ENCODE measurements at regions of chr3 and their contacts with region 1.

Region 1: DNA sequence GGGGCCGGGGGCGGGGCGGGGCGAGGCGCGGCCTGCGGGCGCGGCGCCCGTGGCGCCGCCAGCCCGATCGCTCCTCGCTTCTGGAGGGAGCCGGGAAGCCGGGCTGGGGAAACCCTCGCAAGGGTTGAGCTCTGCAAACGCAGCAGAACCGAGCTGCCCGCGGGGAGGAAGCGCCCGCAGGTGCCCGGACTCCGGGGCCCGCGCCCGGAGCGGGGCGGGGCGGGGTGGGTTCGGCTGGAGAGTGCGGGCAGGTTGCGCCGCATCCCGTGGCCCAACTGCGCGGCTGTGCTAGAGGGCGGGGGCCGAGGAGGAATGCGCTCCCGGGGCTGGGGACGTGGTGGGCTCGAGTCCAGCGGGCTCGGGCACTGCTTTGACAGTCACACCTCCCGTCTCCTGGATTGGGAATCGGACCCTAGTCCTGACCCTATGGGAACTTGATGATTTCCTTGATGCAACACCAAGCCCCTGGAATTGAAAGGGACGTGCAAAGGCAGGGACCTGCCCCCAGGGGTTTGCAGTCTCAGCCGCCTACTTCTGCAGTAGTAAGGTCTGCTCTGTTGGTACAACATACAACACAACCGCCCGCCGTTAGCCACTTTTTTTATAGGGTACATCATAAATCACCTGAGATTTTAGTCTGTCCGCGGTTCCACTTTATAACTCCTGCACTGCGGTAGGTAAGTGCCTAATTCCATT is 34.3 kb downstream of the ZBTB38 start:
- DNase-seq: peak; percentile 60
- H3K4me3 Mint-ChIP-seq: peak overlapping the region; percentile 88
- H3K27ac Mint-ChIP-seq: peak overlapping the region; percentile 92
- H3K4me1 Mint-ChIP-seq: peaks cover 67% of the 10 kb centered on the region
- H3K27me3 Mint-ChIP-seq: no peaks in the 10 kb centered on the region

Region 2: GRCh38 chr3:140467104-140467577 is 935.5 kb before region 1 on chr3:
- CTCF ChIA-PET with region 1: no interaction called
- POLR2A ChIA-PET with region 1: no interaction called
- intact Hi-C with region 1: no loop called
- DNase-seq: peak; percentile 10
- H3K4me3 Mint-ChIP-seq: no peak overlapping the region
- H3K27ac Mint-ChIP-seq: no peak overlapping the region
- H3K4me1 Mint-ChIP-seq: no peaks in the 10 kb centered on the region
- H3K27me3 Mint-ChIP-seq: no peaks in the 10 kb centered on the region

Region 3: DNA sequence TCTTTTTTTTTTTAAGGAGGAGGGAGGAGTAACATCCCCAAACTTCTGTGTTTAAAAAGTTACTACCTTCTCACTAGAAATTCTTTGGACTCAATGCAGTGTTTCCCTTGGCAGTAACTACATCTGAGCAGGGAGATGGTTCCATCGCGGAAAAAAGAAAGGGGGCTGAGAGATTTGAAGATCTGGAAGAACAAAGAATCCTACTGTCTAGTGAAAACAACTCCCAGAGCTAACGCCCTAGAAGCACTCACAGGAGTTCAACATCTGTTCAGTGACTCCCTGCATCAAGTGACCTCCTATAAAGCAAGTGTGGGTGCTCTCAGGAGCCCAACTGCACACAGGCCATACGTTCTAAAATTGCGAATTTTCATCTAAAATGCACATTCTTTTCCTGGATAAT is 237.8 kb before region 1 on chr3:
- CTCF ChIA-PET with region 1: no interaction called
- POLR2A ChIA-PET with region 1: no interaction called
- intact Hi-C with region 1: no loop called
- DNase-seq: no peak
- H3K4me3 Mint-ChIP-seq: no peak overlapping the region
- H3K27ac Mint-ChIP-seq: no peak overlapping the region
- H3K4me1 Mint-ChIP-seq: no peaks in the 10 kb centered on the region
- H3K27me3 Mint-ChIP-seq: peaks cover 3% of the 10 kb centered on the region

Region 4: DNA sequence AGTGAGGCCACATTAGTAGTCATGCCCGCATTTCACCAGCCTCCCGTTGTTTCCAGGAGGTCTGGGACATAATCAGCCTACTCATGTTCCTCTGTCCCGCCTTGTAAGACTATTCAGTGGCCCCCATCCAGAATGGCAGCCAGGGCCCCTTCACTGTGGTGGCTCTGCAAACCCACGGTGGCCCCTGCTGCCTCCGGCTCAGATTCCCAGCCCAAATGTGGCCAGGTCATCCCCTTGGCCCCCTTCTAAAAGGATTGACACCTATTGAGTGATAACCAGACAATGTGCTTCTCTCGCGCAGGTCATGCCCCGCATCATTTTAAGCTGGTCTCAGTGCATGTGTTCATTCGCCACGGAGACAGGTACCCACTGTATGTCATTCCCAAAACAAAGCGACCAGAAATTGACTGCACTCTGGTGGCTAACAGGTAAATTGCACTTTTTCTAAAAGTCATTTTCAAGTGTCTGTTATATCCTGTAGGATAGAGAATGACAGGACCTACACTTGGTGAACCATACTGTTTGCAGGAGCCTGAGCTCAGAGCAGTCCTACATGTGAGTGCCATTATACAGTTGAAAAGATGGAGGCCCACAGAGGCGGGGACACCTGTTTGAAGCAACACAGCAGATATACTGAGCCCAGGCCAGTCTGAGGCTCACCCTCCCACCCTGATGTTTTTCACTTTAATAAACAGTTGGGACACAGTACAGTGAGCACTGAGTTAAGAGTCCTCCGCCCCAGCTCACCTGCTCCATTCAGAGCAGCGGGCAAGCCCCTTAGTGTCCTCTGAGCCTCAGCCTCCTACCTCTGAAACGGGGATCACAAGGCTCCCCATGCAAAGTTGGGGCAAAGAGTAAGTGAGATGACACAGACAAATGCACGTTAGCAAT is 123.3 kb before region 1 on chr3:
- CTCF ChIA-PET with region 1: no interaction called
- POLR2A ChIA-PET with region 1: no interaction called
- intact Hi-C with region 1: no loop called
- DNase-seq: no peak
- H3K4me3 Mint-ChIP-seq: no peak overlapping the region
- H3K27ac Mint-ChIP-seq: no peak overlapping the region
- H3K4me1 Mint-ChIP-seq: peaks cover 20% of the 10 kb centered on the region
- H3K27me3 Mint-ChIP-seq: no peaks in the 10 kb centered on the region

Region 5: DNA sequence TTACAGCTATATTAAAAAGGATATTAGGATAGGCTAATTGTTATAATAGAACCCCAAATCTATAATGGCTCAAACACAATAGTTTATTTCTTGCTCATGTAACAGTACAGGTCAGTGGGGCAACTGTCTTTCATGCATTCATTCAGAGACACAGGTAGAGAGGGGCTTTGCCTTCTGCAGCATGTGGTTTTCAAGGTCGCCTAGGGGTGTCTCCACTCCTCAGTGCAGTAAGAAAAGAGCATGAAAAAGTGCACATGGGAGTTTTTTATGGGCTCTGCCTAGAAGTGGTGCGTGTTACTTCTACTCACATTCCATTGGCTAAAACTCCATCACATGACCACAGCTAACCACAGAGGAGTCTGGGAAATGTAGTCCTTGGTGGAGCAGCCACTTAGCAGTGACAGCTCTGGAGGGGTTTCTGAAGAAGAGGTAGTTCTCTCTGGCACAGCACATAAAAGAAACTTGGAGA is 32.5 kb before region 1 on chr3:
- CTCF ChIA-PET with region 1: interaction called, 5 read pairs
- POLR2A ChIA-PET with region 1: interaction called, 8 read pairs
- intact Hi-C with region 1: loop called (anchors 1 kb)
- DNase-seq: peak; percentile 68
- H3K4me3 Mint-ChIP-seq: no peak overlapping the region
- H3K27ac Mint-ChIP-seq: peak overlapping the region; percentile 40
- H3K4me1 Mint-ChIP-seq: peaks cover 58% of the 10 kb centered on the region
- H3K27me3 Mint-ChIP-seq: no peaks in the 10 kb centered on the region

Region 6: DNA sequence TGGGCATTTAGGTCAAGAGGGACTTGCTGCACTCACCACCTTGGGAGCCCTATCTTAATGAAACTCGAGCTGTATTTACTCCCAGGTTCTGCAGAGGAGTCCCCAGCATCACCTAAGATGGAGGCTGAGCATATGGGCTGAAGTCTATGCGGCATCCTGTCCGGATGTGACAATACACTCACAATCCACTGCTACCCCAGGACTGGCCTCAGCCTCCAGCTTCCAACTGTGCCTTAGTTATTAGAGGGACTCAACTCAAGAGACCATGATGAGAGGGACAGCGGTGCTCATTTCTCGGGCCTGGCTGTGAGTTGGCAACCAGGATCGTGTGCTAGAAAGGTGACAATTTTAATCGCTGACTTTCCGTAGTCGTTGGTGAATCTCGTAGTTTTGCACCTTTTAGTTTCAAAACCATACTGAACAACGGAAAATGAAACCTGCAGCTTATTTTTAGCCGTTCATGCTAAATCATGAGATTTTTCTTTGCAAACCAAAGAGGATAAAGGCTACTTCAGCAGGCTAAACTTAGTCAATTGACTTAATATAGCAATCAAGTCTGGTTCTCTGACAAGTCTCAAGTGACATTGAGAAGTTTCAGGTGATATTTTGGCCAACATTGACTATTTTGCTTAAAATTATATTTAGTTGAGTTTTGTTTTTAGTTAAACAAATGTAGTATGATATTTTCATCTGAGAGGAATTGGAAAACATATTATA is 23.2 kb before region 1 on chr3:
- CTCF ChIA-PET with region 1: interaction called, 6 read pairs
- POLR2A ChIA-PET with region 1: interaction called, 49 read pairs
- intact Hi-C with region 1: no loop called
- DNase-seq: peak; percentile 77
- H3K4me3 Mint-ChIP-seq: peak overlapping the region; percentile 49
- H3K27ac Mint-ChIP-seq: peak overlapping the region; percentile 97
- H3K4me1 Mint-ChIP-seq: peaks cover 65% of the 10 kb centered on the region
- H3K27me3 Mint-ChIP-seq: no peaks in the 10 kb centered on the region

Region 7: DNA sequence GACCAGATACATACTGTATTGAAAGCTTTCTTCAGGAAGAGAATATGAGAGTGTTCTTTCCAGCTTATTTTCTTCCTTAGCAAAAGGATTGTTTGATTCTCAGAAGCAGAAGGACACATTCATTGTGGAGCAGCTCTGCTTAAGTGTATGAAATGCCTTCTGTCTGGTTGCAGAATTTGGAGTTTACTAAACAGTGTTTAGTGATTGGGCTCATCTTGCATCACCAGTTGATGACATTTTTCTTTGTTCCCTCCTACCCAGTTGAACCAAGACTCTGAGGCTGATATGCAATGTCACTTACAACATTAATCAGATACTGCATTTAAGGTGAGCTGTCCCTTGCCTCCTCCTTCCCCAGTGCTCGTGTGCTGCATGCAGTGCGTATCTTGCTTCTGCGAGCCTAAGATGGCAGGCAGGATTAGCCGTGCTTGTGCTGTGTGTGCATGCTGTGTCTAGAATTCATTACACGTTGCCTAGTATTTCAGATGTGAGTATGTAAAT is 16.0 kb before region 1 on chr3:
- CTCF ChIA-PET with region 1: interaction called, 8 read pairs
- POLR2A ChIA-PET with region 1: interaction called, 49 read pairs
- intact Hi-C with region 1: loop called (anchors 1 kb)
- DNase-seq: peak; percentile 31
- H3K4me3 Mint-ChIP-seq: peak overlapping the region; percentile 81
- H3K27ac Mint-ChIP-seq: peak overlapping the region; percentile 87
- H3K4me1 Mint-ChIP-seq: peaks cover 30% of the 10 kb centered on the region
- H3K27me3 Mint-ChIP-seq: peaks cover 5% of the 10 kb centered on the region